ENCODE measurements at regions of chr3 and their contacts with region 1.

Region 1: DNA sequence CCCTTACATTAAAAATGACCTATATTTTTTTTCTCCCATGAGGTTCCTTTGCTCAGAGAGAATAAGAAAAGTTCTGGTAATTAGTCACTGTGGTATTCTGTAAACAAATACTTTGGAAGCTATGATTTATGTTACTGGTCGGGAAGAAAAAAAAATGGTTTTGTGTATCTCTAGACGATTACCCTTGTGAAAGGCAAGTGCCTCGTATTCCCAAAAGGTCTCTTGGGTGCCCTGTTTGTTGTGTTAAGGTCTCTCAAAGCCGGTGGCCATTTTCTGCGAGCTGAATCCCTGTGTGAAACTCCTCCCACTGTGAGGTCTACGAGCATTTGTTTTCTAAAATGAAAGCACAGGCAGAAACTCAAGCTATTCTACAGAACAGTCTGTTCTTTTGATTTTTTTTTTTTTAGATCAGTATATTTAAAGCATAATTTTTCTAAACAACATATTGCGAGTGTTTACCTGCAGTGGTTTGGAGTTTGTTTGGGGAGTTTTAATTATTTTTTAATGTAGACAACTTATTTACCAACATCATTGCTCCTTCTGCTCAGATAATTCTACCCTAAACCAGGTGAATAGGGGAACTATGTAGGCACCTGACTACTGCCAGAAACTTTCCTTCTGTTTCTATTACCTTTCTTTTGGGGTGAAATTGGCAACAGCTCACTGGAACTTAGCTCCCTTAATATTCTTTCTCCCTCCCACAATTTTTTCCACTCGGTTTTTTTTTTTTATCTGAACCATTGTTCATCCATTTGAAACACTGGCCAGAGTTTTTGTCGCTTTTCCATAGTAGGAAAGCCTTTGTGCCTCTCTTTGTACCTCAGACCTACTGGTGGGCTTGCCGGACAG is 44.0 kb downstream of the ZBTB38 start:
- DNase-seq: peak; percentile 88
- H3K4me3 Mint-ChIP-seq: peak overlapping the region; percentile 83
- H3K27ac Mint-ChIP-seq: peak overlapping the region; percentile 99
- H3K4me1 Mint-ChIP-seq: peaks cover 48% of the 10 kb centered on the region
- H3K27me3 Mint-ChIP-seq: no peaks in the 10 kb centered on the region

Region 2: GRCh38 chr3:140695361-140696061 is 716.8 kb before region 1 on chr3:
- intact Hi-C with region 1: no loop called
- DNase-seq: peak; percentile 38
- H3K4me3 Mint-ChIP-seq: no peak overlapping the region
- H3K27ac Mint-ChIP-seq: no peak overlapping the region
- H3K4me1 Mint-ChIP-seq: no peaks in the 10 kb centered on the region
- H3K27me3 Mint-ChIP-seq: peaks cover 3% of the 10 kb centered on the region

Region 3: GRCh38 chr3:141370065-141370533 is 42.2 kb before region 1 on chr3:
- intact Hi-C with region 1: loop called (anchors 5 kb)
- DNase-seq: peak; percentile 89
- H3K4me3 Mint-ChIP-seq: no peak overlapping the region
- H3K27ac Mint-ChIP-seq: no peak overlapping the region
- H3K4me1 Mint-ChIP-seq: peaks cover 20% of the 10 kb centered on the region
- H3K27me3 Mint-ChIP-seq: no peaks in the 10 kb centered on the region

Region 4: DNA sequence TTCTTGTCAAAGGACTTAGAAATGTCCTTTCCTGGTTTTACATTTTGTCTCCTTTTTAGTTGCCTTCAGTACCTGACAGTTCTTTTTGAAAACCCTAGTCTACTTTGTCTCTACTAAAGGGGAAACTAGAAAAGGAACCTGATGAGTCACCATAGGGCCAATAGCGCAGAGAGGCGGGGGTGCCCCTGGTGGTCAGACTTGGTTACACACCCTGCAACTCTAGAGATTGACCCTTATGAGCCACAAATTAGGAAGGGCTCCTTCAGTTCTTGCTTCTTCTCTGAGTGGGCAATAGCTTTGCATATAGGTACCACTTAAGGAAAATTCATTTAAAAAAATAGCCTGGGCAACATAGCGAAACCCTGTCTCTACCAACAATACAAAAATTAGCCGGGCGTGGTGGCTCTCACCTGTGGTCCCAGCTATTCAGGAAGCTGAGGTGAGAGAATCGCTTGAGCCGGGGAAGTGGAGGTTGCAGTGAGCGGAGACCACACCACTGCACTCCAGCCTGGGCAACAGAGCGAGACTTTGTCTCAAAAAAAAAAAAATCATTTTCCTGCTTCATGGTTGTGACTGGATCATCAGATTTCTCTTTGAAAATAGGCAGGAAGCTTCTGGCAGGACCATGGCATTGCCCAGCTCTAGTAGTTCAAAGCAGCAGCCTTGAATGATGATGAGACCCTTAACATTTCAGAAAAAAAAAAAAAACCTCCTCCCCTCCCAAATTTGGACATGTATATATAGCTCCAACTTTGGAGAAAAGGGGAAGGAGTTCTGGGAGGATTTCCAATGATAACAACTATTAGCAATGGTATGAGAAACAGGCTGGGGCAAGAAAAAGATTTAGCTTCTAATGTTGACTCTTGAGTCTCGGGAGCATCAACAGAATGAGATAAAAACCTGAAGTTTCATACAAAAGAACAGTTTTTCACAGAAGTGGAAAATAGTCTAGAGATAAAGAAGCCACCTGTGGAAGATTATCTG is 29.4 kb after region 1 on chr3:
- intact Hi-C with region 1: loop called (anchors 1 kb)
- DNase-seq: peak; percentile 90
- H3K4me3 Mint-ChIP-seq: no peak overlapping the region
- H3K27ac Mint-ChIP-seq: peak overlapping the region; percentile 16
- H3K4me1 Mint-ChIP-seq: peaks cover 13% of the 10 kb centered on the region
- H3K27me3 Mint-ChIP-seq: no peaks in the 10 kb centered on the region

Region 5: DNA sequence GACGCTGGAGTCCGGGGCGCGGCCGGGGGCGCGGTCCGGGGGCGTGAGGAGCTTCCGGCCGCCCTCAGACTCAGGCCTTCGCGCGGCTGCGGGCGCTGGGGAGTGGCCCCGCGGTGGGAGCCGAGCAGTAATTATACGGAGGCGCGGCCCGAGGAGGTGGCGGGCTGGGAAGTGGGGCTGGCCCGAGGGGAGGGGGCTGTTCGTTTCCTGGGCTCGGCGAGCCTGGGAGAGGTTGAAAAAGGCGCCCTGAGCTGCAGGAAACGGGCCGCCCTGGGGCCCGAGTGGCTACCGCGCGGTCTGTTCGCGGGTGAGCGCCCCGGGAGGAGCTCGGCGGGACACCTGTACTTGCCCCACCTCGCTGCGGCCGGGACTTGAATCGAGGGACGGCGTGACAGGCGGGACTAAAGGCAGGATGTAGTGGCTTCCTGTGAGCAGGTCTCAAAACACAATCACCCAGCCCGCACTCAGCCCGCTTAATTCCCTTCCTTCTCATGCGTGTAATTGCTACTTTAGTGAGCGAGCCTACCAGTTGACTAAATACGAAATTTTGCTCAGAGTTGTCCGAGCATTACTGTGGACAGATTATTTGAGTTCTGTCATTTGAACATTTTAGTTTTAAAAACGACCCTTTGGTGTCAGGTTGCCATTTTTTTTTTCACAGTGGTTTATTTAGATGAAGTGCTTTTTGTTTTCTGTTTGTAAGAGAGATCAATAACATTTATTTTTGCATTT is 75.4 kb after region 1 on chr3:
- intact Hi-C with region 1: loop called (anchors 5 kb)
- DNase-seq: peak; percentile 96
- H3K4me3 Mint-ChIP-seq: peak overlapping the region; percentile 92
- H3K27ac Mint-ChIP-seq: peak overlapping the region; percentile 92
- H3K4me1 Mint-ChIP-seq: peaks cover 58% of the 10 kb centered on the region
- H3K27me3 Mint-ChIP-seq: peaks cover 2% of the 10 kb centered on the region

Region 6: DNA sequence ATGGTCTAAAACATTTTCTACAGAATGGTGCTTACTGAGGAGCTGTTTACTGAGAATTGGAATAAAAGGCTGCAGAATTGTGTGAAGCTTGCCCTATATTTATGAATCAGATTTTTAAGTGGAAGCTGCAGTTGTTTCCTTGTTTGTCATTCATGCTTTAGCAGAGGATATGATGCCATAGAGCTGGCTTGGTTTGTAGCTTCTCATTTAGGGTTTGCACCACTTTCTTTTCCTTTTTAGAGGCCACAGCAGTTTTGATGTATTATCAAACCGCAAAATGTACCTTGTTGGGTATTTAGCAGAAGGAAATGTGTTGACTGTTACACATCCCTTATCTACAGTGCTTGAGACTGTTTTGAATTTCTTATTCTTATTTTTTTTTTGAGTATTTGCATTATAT is 140.7 kb after region 1 on chr3:
- intact Hi-C with region 1: loop called (anchors 2 kb)
- DNase-seq: peak; percentile 81
- H3K4me3 Mint-ChIP-seq: peak overlapping the region; percentile 60
- H3K27ac Mint-ChIP-seq: peak overlapping the region; percentile 92
- H3K4me1 Mint-ChIP-seq: peaks cover 44% of the 10 kb centered on the region
- H3K27me3 Mint-ChIP-seq: no peaks in the 10 kb centered on the region

Measured in activated CD4-positive, alpha-beta T cell treated with anti-CD3 and anti-CD28 coated beads, Interleukin-2, amount 10 ng/mL, durations not matched to agents 24 days and 14 days (primary cell).